Activated CD4-positive, alpha-beta T cell treated with anti-CD3 and anti-CD28 coated beads, Interleukin-2, amount 10 ng/mL, durations not matched to agents 7 days and 5 days (primary cell): ENCODE measurements at regions of chr16 and their contacts with region 1.

Region 1: DNA sequence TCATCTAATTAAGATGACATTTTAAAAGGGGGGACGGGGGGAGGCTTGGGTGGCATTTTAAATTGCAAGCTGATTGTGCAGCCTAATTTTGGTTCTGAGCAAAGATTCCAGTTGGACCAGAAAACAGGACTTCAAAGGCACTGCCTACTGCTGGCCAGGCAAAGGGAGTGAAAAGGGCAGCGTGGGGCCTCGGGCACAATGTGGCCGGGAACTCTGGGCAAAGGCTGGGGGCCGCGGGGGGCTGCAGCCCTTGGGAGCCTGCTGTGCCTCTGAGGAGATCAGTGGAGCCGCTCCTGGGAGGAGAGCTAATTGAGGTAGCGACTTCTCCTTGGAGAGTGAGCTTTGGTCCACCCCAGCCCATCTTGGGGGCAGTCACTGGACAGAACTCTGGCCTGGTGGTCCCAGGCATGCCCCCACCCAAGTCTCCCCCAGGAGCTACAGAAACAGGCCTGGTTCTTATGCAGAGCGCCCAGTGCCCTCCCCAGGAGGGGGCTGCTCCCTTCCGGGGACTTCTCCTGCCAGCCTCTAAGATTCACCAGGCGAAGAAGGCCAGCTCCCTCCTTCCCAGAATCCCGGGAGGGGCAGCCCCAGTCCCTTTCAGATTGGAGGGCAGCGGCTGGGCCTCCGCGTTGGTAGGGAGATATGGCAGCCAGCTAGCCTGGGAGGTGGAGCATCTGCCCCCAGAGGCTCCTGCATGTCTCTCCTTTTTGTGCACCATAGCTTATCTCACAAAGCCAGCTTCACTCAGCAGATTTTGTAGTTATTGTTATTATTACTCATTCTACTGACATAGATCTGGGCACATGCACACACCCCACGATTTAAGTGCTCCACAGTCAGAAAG is 115.6 kb downstream of the GNAO1 start:
- DNase-seq: no peak
- H3K4me3 Mint-ChIP-seq: no peak overlapping the region
- H3K27ac Mint-ChIP-seq: no peak overlapping the region
- H3K4me1 Mint-ChIP-seq: no peaks in the 10 kb centered on the region
- H3K27me3 Mint-ChIP-seq: no peaks in the 10 kb centered on the region

Region 2: GRCh38 chr16:56317998-56318826 is 11.3 kb after region 1 on chr16:
- CTCF ChIA-PET with region 1: interaction called, 10 read pairs
- POLR2A ChIA-PET with region 1: no interaction called
- DNase-seq: peak; percentile 81
- H3K4me3 Mint-ChIP-seq: peak overlapping the region; percentile 17
- H3K27ac Mint-ChIP-seq: no peak overlapping the region
- H3K4me1 Mint-ChIP-seq: peaks cover 15% of the 10 kb centered on the region
- H3K27me3 Mint-ChIP-seq: peaks cover 3% of the 10 kb centered on the region